Activated CD4-positive, alpha-beta T cell treated with anti-CD3 and anti-CD28 coated beads, Interleukin-2, amount 10 ng/mL, durations not matched to agents 24 days and 14 days (primary cell): ENCODE measurements at regions of chr12 and their contacts with region 1.

Region 1: GRCh38 chr12:21169878-21170472 is 39.0 kb downstream of the SLCO1B1 start:
- DNase-seq: peak; percentile 79
- H3K4me3 Mint-ChIP-seq: no peak overlapping the region
- H3K27ac Mint-ChIP-seq: no peak overlapping the region
- H3K4me1 Mint-ChIP-seq: no peaks in the 10 kb centered on the region
- H3K27me3 Mint-ChIP-seq: no peaks in the 10 kb centered on the region

Region 2: DNA sequence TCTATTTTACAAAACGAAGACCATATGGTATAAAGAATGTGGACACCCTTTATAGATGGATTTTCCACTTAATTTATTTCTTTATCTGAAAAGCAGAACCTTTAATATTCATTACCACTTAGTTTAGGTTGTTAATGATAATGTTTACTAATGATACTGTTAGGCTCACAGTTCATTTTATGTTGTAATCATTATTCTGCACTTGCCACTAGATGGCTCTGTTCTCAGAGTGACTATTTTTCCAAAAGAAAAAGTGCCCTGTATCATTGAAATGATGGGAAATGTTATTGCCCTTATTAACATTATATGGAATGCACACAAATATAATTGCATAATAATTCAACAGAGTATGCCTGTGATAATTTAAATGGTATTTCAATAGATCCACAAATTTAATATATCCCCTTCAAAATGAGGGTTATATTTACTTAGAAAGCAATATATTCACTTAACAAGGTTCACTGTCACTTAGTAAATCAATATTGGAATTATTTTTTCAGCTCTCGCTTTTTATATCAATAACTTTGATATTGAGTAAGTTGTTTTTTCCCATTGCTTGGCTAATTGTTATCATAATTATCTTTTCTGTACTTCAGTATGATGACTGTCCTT is 706.0 kb before region 1 on chr12:
- intact Hi-C with region 1: loop called (anchors 10 kb)
- DNase-seq: no peak
- H3K4me3 Mint-ChIP-seq: no peak overlapping the region
- H3K27ac Mint-ChIP-seq: no peak overlapping the region
- H3K4me1 Mint-ChIP-seq: no peaks in the 10 kb centered on the region
- H3K27me3 Mint-ChIP-seq: no peaks in the 10 kb centered on the region

Region 3: GRCh38 chr12:20646239-20646827 is 523.6 kb before region 1 on chr12:
- intact Hi-C with region 1: loop called (anchors 2 kb)
- DNase-seq: no peak
- H3K4me3 Mint-ChIP-seq: no peak overlapping the region
- H3K27ac Mint-ChIP-seq: no peak overlapping the region
- H3K4me1 Mint-ChIP-seq: no peaks in the 10 kb centered on the region
- H3K27me3 Mint-ChIP-seq: no peaks in the 10 kb centered on the region

Region 4: DNA sequence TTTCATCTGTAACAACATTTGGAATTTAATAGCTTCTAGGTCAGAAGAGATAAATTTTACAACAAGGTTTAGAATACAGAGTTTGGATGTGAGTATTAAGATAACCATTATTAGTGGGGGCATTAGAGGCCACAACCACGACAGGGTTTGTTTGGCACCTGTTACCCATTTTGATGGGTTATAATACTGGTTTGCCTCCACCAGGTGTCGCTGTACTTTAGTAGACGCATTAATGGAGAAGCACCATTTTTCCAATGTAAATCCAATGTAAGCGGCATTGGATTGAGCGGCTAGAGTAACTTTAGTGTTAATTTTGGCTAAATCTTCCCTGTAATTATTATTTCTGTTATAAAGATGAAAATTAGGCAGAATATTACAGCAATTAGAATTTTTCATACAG is 223.2 kb before region 1 on chr12:
- intact Hi-C with region 1: loop called (anchors 10 kb)
- DNase-seq: peak; percentile 65
- H3K4me3 Mint-ChIP-seq: no peak overlapping the region
- H3K27ac Mint-ChIP-seq: no peak overlapping the region
- H3K4me1 Mint-ChIP-seq: no peaks in the 10 kb centered on the region
- H3K27me3 Mint-ChIP-seq: no peaks in the 10 kb centered on the region